Left colon (tissue), 2 donors: ENCODE measurements at regions of chr14 and their contacts with region 1.

Region 1: DNA sequence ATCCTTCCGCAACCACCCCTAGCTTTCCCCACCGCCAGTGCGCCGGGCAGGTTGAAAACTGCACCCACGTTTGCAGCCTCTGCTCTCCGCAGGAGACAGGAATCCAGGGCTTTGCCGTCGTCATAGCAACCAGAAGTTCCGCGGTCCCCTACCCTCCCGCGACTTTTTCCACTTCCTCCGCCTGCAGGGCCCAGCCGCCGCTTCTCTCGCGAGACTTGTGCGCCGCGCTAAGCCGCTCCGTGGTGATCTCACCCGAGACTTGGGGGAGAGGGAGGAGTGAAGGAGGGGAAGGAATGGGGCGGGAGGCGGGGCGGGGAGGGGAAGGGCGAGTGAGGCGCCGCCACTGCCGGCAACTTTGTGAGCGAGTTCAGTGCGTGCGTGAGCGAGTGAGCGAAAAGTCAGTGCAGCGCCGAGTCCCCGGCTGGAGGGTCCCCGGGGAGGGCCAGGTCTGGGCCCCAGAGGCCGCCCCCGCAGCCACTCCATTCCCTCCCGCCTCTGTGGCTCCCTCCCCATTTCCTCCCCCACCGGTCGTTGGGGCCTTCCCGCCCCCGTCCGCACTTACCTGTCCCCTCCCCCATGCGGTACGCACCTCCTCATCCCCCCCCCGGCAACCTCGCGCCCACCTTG is 413.0 kb downstream of the PCNX1 start:
- DNase-seq: peak; percentile 97 to 99
- ATAC-seq: peak; percentile 82

Region 2: GRCh38 chr14:70934084-70934483 is 386.1 kb before region 1 on chr14:
- intact Hi-C with region 1: no loop called
- DNase-seq: no peak
- ATAC-seq: no peak

Region 3: GRCh38 chr14:71155743-71156142 is 164.5 kb before region 1 on chr14:
- intact Hi-C with region 1: loop called in 1 of 2 experiments (anchors 10 kb)
- DNase-seq: no peak
- ATAC-seq: no peak

Region 4: GRCh38 chr14:71488703-71489191 is 168.5 kb after region 1 on chr14:
- intact Hi-C with region 1: no loop called
- DNase-seq: no peak
- ATAC-seq: no peak

Region 5: DNA sequence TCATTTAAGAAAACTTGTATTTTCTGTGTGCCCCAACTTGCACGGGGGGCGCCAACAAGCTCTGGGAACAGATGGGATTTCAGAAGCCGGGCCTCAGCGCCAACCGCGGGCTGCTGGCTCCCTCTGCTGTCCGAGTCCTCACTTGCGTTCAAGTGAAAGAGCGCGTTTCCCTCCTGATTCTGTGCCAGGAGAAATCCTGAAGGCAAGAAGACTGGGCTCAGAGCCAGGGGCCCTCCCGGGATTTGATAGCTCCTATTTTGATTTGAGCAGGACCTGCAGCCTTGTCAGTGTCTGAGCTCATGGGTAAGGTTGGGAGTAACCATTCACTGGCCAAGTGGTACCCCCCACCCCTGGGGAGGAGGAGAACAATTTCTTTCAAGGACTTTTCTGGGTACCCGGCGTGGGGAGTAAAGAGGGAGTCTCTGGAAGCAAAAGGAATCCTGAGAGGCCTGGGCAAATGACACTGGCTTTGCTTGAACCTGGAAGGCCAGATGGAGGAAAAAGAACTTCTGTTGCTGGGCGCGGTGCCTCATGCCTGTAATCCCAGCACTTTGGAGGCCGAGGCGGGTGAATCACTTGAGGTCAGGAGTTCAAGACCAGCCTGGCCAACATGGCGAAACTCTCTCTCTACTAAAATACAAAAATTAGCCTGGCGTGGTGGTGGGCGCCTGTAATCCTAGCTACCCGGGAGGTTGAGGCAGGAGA is 433.1 kb after region 1 on chr14:
- intact Hi-C with region 1: loop called in 1 of 2 experiments (anchors 10 kb)
- DNase-seq: peak; percentile 75 to 92
- ATAC-seq: peak; percentile 92